Pancreas (tissue), 10 donors: ENCODE measurements at regions of chr10 and their contacts with region 1.

Region 1: GRCh38 chr10:15433850-15434537 is 62.9 kb upstream of the FAM171A1 start:
- DNase-seq: no peak
- ATAC-seq: peak; percentile 56 to 85 (median 76)
- H3K4me3 ChIP-seq: peak overlapping the region in 1 of 4 donors; percentile 19
- H3K27ac ChIP-seq: no peak overlapping the region
- H3K4me1 ChIP-seq: no peaks in the 10 kb centered on the region
- H3K27me3 ChIP-seq: no peaks in the 10 kb centered on the region
- CTCF ChIP-seq: peak; percentile 37 to 68 (median 60)

Region 2: DNA sequence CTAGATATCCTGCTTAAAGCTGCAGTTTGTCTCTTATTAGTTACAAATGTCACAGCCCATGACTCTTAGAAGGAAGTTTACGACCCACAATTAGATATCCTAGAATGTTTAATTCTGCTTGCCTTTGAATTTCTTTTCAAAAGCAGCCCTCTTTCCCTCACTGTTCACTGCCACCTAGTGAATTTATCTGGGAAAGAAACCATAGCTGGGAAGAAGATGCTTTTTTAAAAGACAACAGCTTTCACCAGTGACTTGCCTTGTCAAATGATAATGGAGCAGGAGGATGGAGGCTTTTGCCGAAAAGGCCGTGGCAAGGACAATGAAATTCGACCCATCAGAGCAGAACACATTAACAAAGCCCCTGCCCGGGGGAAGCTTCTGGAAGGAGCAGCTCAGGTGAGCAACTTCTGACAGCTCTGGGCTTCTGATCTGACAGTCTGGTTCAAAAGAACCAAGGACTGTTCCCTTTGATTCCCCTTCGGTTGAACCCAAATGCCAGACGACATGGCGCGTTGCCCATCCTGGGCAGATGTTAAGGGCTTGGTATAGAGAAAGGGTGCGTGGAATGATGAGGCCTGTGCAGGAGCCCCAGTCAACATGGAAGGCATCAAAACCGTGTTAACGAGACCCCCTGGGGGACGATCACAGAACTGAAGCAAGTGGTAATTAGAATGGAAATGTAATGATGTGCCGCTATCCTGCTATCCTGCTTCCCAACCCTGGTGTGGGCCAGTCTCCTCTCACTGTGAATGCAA is 1340.1 kb before region 1 on chr10:
- intact Hi-C with region 1: no loop called
- DNase-seq: no peak
- ATAC-seq: peak in 1 of 4 donors; percentile 30
- H3K4me3 ChIP-seq: no peak overlapping the region
- H3K27ac ChIP-seq: no peak overlapping the region
- H3K4me1 ChIP-seq: peaks cover 0 to 3% (median 0%) of the 10 kb centered on the region in 3 donors
- H3K27me3 ChIP-seq: no peaks in the 10 kb centered on the region
- CTCF ChIP-seq: no peak

Region 3: DNA sequence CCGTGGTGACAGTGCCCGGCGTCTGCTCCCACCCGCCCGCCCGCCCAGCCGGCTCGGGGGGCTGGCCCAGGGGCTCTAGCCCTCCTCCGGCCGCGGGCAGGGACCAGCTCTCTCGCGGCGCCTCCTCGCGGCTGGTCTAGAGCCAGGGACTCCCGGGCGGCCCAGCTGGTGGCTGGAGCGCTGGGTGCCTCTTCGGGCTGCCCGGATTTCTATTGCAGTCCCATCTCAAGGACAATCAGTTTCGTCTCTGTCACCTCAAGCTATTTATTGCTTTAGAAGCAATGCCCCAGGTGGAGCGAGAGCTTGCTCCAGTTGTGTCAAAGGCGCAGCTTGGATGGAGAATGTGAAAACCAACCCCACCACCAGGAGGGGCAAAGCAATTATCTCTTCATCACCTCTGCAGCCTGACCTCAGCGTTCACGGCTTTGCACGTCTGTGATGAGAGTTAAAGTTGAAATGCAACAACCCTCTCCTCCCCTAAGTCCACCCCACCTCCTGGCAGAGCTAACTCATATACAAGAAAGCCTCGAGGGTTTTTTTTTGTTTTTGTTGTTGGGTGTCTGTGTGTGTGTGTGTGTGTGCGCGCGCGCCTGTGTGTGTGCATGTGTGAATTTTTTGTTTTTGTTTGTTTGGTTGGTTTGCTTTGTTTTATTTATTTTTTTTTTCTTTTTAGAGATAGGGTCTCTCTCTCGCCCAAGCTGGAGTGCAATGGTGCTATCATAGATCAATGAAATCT is 286.1 kb after region 1 on chr10 and contains the start of gene ITGA8:
- intact Hi-C with region 1: loop called in 2 of 3 experiments (anchors 10 kb)
- DNase-seq: no peak
- ATAC-seq: peak in 1 of 4 donors; percentile 29
- H3K4me3 ChIP-seq: peak within 1 kb of the TSS in 2 of 4 donors; percentile 18 to 27
- H3K27ac ChIP-seq: no peak within 1 kb of the TSS
- H3K4me1 ChIP-seq: no peaks in the 10 kb centered on the region
- H3K27me3 ChIP-seq: peaks cover 0 to 21% (median 8%) of the 10 kb centered on the region in 4 donors
- CTCF ChIP-seq: no peak
- total RNA-seq, gene ITGA8: 0.12 to 0.79 (median 0.34) TPM

Region 4: DNA sequence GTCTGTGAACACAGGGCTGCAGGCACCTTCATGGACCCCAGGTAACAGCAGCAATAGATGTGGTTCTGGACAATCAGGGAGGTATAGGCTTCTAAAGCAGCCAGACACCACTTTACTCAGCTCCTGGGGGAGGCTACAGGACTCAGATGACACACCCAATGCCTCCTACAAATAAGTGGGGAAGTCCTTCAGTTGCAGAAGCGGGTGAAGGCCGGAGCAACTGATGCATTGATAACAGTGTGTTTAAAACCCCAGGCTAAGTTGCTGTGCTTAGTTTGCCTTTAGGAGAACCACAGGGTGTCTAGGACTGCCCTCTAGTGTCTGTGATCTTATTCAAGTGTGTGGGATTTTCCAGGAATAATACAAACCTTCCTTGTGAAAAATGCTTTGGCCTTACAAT is 291.6 kb after region 1 on chr10:
- intact Hi-C with region 1: loop called in 1 of 3 experiments (anchors 10 kb)
- DNase-seq: no peak
- ATAC-seq: peak in 3 of 4 donors; percentile 66 to 75 (median 67)
- H3K4me3 ChIP-seq: no peak overlapping the region
- H3K27ac ChIP-seq: no peak overlapping the region
- H3K4me1 ChIP-seq: no peaks in the 10 kb centered on the region
- H3K27me3 ChIP-seq: no peaks in the 10 kb centered on the region
- CTCF ChIP-seq: peak in 3 of 4 donors; percentile 7 to 15 (median 13)